GM13977 (cell line): ENCODE measurements at regions of chr18 and their contacts with region 1.

Region 1: DNA sequence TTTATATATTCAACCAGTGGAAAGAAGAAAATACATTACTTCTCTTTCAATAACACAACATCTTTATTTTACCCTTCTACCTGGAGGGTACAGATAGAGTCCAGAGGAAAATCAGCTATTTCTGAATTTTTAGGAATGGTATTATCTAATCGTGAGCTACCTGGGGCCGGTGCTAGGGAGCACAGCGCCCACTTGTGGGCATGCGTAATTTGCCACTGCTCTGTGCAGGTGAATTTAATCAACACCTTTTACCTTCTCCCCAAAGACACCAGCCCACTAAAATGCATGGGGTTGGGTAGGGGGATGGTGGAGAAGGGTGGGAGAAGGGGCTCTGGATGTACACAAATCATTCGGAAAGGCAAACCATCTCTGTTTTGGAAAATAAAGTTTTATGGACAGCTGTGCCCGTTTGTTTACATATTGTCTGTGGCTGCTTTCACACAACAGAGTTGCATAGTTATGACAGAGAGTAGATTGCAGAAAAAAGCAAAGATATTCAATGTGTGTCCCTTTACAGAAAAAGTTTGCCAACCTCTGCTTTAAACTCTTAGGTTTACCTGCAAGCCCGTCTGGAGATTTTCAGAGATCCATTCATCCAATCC is 51.5 kb upstream of the DCC start:
- DNase-seq: peak; percentile 10
- CTCF ChIP-seq: peak; percentile 91

Region 2: DNA sequence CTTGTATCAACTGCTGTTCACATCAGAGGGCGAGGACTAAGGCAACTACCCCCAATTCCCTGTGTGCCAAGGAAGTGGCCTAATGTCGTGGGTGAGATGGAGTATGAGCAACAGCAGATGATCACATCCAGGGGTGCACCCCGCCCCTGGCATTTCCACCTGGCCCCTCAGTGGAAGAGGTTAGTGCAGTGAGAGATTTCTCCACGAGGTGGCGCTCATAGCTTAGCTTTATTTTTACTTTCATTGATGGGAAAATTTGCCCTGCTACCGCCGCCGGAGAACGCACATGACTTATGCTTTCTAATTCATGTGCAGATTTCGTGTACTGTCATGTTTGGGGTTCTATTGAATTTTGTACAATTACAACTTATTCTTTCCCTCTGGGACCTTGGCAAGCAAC is 620.4 kb before region 1 on chr18:
- in situ Hi-C with region 1: loop called (anchors 10 kb)
- DNase-seq: peak; percentile 33
- CTCF ChIP-seq: peak; percentile 82